ENCODE measurements at regions of chr19 and their contacts with region 1.

Region 1: DNA sequence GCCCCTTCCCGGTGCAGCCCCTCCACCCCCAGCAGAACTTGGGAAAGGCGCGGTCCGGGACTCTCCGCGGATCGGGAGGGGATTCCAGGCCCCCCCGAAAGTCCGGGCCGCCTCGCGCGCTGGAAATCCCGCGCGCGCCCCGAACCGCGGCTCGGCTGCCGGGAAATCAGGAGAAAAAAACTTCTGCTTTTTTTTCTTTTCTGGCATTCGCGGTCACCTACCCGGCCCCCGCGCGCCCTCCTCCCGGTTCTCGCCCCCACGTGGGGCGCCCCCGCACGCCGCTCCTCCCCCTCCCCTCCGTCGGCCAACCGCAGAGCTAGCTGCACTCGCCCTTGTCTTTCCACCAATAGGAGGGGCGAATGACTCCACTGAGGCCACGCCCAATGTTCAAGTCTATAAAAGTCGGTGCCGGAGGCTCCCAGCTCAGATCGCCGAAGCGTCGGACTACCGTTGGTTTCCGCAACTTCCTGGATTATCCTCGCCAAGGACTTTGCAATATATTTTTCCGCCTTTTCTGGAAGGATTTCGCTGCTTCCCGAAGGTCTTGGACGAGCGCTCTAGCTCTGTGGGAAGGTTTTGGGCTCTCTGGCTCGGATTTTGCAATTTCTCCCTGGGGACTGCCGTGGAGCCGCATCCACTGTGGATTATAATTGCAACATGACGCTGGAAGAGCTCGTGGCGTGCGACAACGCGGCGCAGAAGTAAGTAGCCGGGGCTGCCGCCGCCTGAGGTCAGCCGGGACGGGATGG is at the start of gene GADD45B:
- DNase-seq: peak; percentile 95
- H3K4me3 ChIP-seq: peak within 1 kb of the TSS; percentile 84 to 98 (median 94)
- H3K27ac ChIP-seq: peak within 1 kb of the TSS; percentile 77
- H3K4me1 ChIP-seq: peaks cover 23% of the 10 kb centered on the region
- H3K27me3 ChIP-seq: no peaks in the 10 kb centered on the region
- CTCF ChIP-seq: no peak
- total RNA-seq, gene GADD45B: 18.0 to 83.9 TPM

Region 2: DNA sequence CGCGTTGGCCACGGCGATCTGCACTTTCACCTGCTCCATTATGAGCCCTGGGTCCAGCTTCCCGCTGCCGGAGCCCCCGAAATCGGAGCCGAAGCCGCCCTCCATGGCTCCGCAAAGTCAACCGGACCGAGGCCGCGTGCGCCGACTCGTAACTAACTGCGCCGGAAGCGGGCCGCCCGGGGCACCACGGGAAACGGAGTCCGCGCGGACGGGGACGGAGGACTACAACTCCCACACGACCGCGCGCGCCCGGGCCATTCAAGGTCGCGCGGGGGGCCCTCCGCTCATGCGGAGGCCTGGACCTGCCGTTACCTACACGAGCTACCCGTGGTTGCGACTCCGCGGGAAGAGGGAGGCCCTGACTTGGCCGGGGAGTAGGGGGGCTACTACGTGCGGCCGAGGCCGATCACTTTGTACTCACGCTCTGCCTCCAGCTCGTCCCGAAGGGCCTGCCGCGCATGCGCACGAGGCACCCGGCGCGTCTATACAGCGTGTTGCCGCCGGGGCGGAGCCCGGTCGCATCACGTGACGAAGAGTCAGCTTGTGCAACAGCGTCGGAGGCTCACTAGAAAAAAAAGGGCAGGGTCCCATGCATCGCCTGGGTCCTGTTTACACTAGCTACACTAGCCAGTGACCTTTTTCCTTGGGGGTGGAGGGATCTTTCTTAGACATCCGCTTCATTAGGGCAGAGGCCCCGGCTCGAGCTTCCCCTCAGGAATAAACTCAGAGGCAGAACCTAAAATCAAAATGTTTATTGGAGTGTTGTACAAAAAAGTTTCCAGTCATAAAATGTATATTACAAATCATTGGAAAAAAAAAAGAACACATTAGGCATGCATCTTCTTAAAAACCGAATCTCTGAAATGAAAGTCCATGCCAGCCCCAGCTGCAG is 48.2 kb before region 1 on chr19 and contains the start of gene TIMM13:
- CTCF ChIA-PET with region 1: no interaction called
- dilution Hi-C with region 1: no loop called
- in situ Hi-C with region 1: no loop called
- intact Hi-C with region 1: loop called (anchors 1 kb)
- DNase-seq: peak; percentile 92
- H3K4me3 ChIP-seq: peak within 1 kb of the TSS; percentile 53 to 99 (median 77)
- H3K27ac ChIP-seq: peak within 1 kb of the TSS; percentile 74
- H3K4me1 ChIP-seq: peaks cover 23% of the 10 kb centered on the region
- H3K27me3 ChIP-seq: no peaks in the 10 kb centered on the region
- CTCF ChIP-seq: no peak
- total RNA-seq, gene TIMM13: 20.8 to 133 TPM

Region 3: GRCh38 chr19:2446271-2446779 is 29.6 kb before region 1 on chr19:
- CTCF ChIA-PET with region 1: no interaction called
- dilution Hi-C with region 1: no loop called
- in situ Hi-C with region 1: no loop called
- intact Hi-C with region 1: no loop called
- DNase-seq: no peak
- H3K4me3 ChIP-seq: no peak overlapping the region
- H3K27ac ChIP-seq: no peak overlapping the region
- H3K4me1 ChIP-seq: no peaks in the 10 kb centered on the region
- H3K27me3 ChIP-seq: no peaks in the 10 kb centered on the region
- CTCF ChIP-seq: no peak

Region 4: DNA sequence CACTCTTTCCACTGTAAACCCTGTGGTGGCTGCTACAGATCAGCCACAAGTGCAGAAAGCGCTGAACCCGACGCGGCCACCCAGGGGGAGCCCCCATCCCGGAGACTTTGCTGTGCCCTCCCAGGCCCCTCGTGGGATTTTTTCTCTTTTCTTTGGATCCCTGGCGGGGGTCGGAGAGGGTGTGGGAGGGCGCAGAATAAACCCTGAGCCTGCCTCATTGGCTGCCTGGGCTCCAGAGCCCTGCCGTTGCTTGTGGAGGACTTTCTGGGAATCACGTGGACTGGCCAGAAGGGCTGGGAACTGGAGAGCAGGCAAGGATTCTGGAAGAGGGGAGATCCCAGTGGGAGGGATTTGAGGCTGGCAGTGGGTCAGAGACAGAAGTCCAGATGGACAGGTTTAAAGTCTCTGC is 25.0 kb after region 1 on chr19:
- CTCF ChIA-PET with region 1: no interaction called
- dilution Hi-C with region 1: no loop called
- in situ Hi-C with region 1: no loop called
- intact Hi-C with region 1: no loop called
- DNase-seq: no peak
- H3K4me3 ChIP-seq: no peak overlapping the region
- H3K27ac ChIP-seq: no peak overlapping the region
- H3K4me1 ChIP-seq: peaks cover 22% of the 10 kb centered on the region
- H3K27me3 ChIP-seq: no peaks in the 10 kb centered on the region
- CTCF ChIP-seq: no peak

Region 5: DNA sequence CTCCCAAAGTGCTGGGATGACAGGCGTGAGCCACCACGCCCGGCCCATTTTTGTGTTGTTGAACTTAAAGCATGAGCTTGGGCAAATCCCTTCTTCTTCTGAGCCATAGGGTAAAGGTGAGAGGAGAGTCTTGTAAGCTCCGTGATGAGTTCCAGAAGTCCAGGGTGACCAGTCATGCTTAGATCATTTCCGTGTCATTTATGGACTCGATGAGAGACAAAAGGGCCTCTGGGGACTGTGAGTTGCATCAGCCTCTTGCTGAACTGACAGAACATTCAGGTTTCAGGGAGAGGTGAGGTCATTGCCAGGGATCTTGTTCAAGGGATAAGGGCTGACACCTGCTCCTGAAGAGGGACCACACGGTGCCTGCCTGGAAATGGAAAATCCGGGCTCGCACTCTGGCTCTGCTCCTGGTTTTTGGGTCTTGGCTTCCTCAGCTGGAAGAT is 53.6 kb after region 1 on chr19:
- CTCF ChIA-PET with region 1: no interaction called
- dilution Hi-C with region 1: no loop called
- in situ Hi-C with region 1: no loop called
- intact Hi-C with region 1: loop called (anchors 1 kb)
- DNase-seq: peak; percentile 98
- H3K4me3 ChIP-seq: no peak overlapping the region
- H3K27ac ChIP-seq: peak overlapping the region; percentile 49
- H3K4me1 ChIP-seq: peaks cover 45% of the 10 kb centered on the region
- H3K27me3 ChIP-seq: no peaks in the 10 kb centered on the region
- CTCF ChIP-seq: no peak

Region 6: DNA sequence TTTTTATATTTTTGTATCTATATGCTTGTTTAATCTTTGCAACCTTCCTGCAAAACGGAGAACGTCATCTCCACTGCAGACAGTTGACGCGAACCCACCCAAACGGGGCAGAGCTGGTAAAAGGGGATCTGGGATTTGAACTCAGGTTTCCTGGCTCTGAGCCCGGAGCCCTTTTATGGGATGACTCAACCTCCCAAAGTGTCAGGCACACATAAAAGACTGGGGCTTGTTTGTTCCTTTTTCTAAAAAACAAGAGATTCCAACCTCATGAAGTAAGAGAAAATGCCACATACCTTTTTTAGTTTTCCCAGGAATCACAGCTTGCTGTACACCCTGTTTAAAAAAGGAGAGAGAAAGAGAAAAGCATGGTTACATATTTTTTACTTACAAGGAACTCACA is 79.0 kb after region 1 on chr19:
- CTCF ChIA-PET with region 1: interaction called, 4 read pairs
- dilution Hi-C with region 1: loop called (anchors 5 kb)
- in situ Hi-C with region 1: no loop called
- intact Hi-C with region 1: no loop called
- DNase-seq: no peak
- H3K4me3 ChIP-seq: no peak overlapping the region
- H3K27ac ChIP-seq: no peak overlapping the region
- H3K4me1 ChIP-seq: peaks cover 3% of the 10 kb centered on the region
- H3K27me3 ChIP-seq: no peaks in the 10 kb centered on the region
- CTCF ChIP-seq: no peak

Region 7: GRCh38 chr19:2567246-2567979 is 91.5 kb after region 1 on chr19:
- CTCF ChIA-PET with region 1: no interaction called
- dilution Hi-C with region 1: no loop called
- in situ Hi-C with region 1: no loop called
- intact Hi-C with region 1: no loop called
- DNase-seq: no peak
- H3K4me3 ChIP-seq: no peak overlapping the region
- H3K27ac ChIP-seq: no peak overlapping the region
- H3K4me1 ChIP-seq: no peaks in the 10 kb centered on the region
- H3K27me3 ChIP-seq: no peaks in the 10 kb centered on the region
- CTCF ChIP-seq: no peak

Region 8: DNA sequence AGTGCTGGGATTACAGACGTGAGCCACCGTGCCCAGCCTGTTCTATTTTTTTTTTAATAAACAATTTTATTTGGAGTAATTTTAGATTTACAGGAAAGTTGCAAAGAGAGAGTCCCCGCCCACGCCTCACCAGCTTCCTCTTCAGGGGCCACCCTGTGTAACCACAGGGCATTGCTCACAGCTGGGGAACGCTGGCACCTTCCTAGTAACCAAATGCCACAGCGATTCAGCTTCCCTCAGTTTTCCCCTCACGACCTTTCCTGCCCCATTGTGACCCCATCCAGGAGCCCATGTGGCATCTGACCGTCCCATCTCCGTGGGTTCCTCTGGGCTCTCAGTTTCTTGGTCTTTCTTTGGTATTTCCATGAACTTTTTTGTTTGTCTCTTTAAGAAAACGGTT is 142.7 kb after region 1 on chr19:
- CTCF ChIA-PET with region 1: interaction called, 4 read pairs
- dilution Hi-C with region 1: no loop called
- in situ Hi-C with region 1: loop called (anchors 5 to 10 kb)
- intact Hi-C with region 1: no loop called
- DNase-seq: peak; percentile 77
- H3K4me3 ChIP-seq: no peak overlapping the region
- H3K27ac ChIP-seq: peak overlapping the region; percentile 88
- H3K4me1 ChIP-seq: peaks cover 26% of the 10 kb centered on the region
- H3K27me3 ChIP-seq: no peaks in the 10 kb centered on the region
- CTCF ChIP-seq: no peak